ENCODE measurements at regions of chr3 and their contacts with region 1.

Region 1: GRCh38 chr3:109081746-109082510 is 36.0 kb downstream of the MORC1 start:
- DNase-seq: peak; percentile 41 to 45
- H3K4me3 ChIP-seq: no peak overlapping the region
- H3K27ac ChIP-seq: no peak overlapping the region
- H3K4me1 ChIP-seq: no peaks in the 10 kb centered on the region
- H3K27me3 ChIP-seq: no peaks in the 10 kb centered on the region
- CTCF ChIP-seq: peak; percentile 95

Region 2: DNA sequence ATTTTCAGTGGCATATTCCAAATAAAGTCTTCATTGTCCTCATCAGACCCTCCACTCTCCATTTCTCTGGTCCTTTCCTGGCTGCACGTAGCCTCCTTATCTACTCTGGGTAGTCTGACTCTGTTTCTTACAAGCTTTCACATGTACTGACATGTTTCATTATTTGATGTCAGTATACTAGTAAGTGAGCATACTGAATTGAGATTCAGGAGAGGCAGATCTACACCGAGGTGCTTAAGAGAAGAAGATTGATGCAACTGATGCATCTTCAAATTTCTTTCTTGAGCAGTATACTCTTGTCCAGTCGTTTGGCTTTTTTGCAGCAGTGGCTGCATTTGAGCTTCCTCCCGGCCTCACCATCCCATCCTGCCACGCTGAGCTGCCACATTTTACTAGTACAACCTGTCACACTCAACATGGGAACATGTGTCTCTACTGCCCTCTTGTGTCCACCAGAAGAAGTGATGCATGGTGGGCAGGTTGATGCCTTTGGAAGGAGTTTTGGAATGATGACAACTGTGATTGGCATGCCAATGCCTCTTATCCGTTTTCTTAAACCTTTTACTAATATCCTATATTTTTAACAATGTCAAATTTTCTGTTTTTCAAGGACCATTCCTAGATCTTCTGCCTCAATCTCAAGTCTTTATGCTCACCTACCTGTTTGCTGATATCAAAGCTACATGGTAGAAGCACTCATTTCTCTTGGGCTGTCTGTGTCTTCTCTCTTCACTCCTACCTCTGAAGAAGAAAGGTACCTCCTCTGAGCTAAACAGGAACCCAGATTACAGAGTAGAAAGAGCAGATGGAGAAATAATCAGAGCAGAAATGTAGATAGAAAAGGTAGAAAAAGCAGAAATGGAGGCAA is 166.9 kb before region 1 on chr3:
- CTCF ChIA-PET with region 1: no interaction called
- POLR2A ChIA-PET with region 1: no interaction called
- intact Hi-C with region 1: loop called (anchors 1 kb)
- DNase-seq: peak; percentile 54 to 61
- H3K4me3 ChIP-seq: no peak overlapping the region
- H3K27ac ChIP-seq: no peak overlapping the region
- H3K4me1 ChIP-seq: peaks cover 6% of the 10 kb centered on the region; the same call in 1 of the 2 replicates
- H3K27me3 ChIP-seq: no peaks in the 10 kb centered on the region
- CTCF ChIP-seq: peak; percentile 99

Region 3: DNA sequence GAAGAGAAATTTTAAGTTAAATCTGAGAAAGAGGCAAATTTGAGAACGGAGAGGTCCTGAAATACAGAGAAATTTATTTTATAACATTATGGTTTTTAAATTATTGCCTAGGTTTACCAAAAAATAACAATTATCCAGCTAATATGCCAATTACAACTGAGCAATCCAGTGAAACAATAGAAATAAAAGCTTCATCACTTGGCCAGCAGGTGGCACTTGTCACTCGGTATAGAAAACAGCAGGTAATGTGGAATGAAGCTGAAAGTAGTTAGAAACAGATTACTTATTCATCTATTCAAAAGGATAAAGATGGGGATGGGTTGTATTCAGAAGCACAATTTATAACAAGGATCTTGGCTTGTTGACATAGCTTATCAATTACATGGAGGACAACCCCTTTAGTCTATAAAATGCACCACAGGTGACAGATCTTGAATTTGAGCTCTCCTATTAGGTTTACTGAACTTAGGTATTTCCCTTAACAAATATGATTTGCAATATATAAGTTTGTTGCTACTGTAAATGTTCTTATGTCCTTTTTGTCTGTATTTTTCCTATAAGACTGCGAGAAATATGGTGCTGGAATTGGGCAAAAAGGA is 58.2 kb before region 1 on chr3:
- CTCF ChIA-PET with region 1: interaction called, 10 read pairs
- POLR2A ChIA-PET with region 1: no interaction called
- intact Hi-C with region 1: loop called (anchors 2 kb)
- DNase-seq: peak in 1 of 2 experiments; percentile 37
- H3K4me3 ChIP-seq: no peak overlapping the region
- H3K27ac ChIP-seq: no peak overlapping the region
- H3K4me1 ChIP-seq: no peaks in the 10 kb centered on the region
- H3K27me3 ChIP-seq: no peaks in the 10 kb centered on the region
- CTCF ChIP-seq: peak; percentile 94

Region 4: GRCh38 chr3:109254770-109255169 is 172.8 kb after region 1 on chr3:
- CTCF ChIA-PET with region 1: no interaction called
- POLR2A ChIA-PET with region 1: no interaction called
- intact Hi-C with region 1: no loop called
- DNase-seq: no peak
- H3K4me3 ChIP-seq: no peak overlapping the region
- H3K27ac ChIP-seq: no peak overlapping the region
- H3K4me1 ChIP-seq: no peaks in the 10 kb centered on the region
- H3K27me3 ChIP-seq: no peaks in the 10 kb centered on the region
- CTCF ChIP-seq: no peak

Region 5: GRCh38 chr3:109631897-109632296 is 550.0 kb after region 1 on chr3:
- CTCF ChIA-PET with region 1: no interaction called
- POLR2A ChIA-PET with region 1: no interaction called
- intact Hi-C with region 1: no loop called
- DNase-seq: no peak
- H3K4me3 ChIP-seq: no peak overlapping the region
- H3K27ac ChIP-seq: no peak overlapping the region
- H3K4me1 ChIP-seq: no peaks in the 10 kb centered on the region
- H3K27me3 ChIP-seq: no peaks in the 10 kb centered on the region
- CTCF ChIP-seq: no peak

Measured in PC-9 (cell line).